Left ventricle myocardium superior (tissue), 1 donor: ENCODE measurements at regions of chr10 and their contacts with region 1.

Region 1: DNA sequence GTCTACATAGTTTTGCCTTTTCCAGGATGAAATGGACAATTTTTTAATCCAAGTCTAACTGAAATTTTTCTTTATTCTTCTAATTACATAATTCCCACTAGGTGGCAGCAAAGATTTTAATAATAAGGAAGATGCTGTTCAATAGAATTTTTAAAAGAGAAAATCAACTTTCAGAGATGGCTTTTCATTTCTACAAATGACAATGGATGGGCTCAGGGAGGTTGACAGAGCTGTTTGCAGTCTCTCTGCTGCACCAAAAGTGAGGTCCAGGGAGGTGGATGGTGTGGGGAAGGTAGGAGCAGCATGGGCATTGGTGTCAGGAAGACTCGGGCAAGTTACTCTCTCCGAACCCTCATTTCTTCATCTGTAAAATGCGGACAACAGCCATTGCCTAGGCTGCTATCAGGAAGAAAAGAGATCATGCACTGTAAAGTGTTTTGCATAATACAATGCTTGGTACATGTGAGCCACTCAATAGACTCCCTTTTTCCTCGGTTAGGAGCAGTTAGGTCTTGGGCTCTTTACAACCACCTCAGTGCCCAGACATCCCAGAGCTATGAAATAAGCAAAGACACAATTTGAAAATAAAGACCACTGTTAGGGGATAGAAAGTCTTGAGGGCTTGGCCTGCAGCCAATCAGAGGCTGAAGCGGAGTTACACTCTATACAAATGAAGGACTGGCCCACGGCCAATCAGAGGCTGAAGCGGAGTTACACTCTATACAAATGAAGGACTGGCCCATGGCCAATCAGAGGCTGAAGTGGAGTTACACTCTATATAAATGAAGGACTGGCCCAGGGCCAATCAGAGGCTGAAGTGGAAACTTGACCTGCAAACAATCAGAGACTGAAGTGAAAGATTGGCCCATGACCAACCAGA is 107.1 kb downstream of the ABLIM1 start:
- DNase-seq: peak; percentile 72
- ATAC-seq: peak; percentile 44

Region 2: GRCh38 chr10:114279898-114280644 is 270.9 kb before region 1 on chr10:
- intact Hi-C with region 1: no loop called
- DNase-seq: no peak
- ATAC-seq: no peak

Region 3: GRCh38 chr10:114631666-114632417 is 80.8 kb after region 1 on chr10:
- intact Hi-C with region 1: loop called (anchors 10 kb)
- DNase-seq: peak; percentile 76
- ATAC-seq: peak; percentile 56

Region 4: DNA sequence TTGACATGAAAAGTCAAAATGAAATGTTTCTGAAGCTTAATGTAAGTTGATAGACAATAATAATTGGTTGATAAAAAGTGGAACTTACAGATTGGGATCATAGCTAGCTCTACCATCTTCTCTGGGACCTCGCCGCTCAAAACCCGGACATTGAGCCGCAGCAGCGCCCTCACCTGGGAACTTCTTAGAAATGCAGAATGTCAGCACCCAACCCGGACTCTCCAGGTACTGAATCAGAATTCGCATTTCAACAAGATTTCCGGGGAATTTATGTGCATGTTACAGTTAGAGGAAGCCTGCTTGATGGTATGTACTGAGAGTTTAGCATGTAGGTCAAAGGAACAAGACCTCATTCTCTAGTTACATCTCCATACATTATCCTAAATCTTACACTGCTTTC is 143.8 kb after region 1 on chr10:
- intact Hi-C with region 1: loop called (anchors 10 kb)
- DNase-seq: no peak
- ATAC-seq: no peak

Region 5: DNA sequence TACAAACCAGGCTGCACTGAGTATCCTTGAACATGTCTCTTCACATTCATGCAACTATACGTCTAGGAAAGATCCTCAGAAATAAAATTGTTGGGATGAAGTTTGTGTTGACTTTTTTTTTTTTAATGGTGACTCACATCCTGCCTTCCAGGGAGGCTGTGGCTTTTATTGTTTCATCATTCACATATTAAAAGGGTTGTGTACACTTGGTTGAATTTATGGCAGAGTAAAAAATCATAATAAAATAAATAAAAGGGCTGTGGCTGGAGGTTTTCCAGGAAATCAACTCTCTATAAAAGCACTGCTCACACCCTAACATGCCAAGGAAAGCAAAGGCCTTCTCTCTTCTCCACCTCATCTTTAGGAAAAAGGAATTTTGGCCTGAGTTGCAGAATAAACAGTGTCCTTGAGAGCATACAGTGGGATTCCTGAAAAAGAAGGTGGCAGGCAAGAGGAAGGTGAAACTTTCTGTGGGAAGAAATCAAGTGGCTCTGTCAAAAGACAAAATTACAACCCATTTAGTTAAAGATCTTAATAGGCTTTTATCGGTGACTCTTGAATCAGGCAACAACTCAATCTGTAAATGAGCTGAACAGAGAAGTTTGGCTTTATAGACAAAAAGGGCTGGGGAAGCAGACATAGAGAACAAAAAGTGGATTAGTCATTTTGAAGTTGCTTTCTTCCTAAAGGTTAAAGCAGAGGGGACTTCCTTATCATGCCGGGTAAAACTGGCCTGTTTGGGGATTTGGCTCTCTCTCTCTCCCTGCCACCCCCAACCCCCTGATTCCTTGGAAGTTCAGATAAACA is 229.0 kb after region 1 on chr10:
- intact Hi-C with region 1: loop called (anchors 10 kb)
- DNase-seq: no peak
- ATAC-seq: no peak